Activated naive CD8-positive, alpha-beta T cell treated with anti-CD3 and anti-CD28 coated beads, Interleukin-2, amount 10 ng/mL, durations not matched to agents 7 days and 5 days (primary cell): ENCODE measurements at regions of chr14 and their contacts with region 1.

Region 1: GRCh38 chr14:63852817-63853731 is at the start of gene SYNE2:
- DNase-seq: peak; percentile 91
- ATAC-seq: peak; percentile 85
- H3K4me3 Mint-ChIP-seq: peak within 1 kb of the TSS; percentile 94
- H3K27ac Mint-ChIP-seq: peak within 1 kb of the TSS; percentile 90
- H3K4me1 Mint-ChIP-seq: peaks cover 36% of the 10 kb centered on the region
- H3K27me3 Mint-ChIP-seq: no peaks in the 10 kb centered on the region
- total RNA-seq, gene SYNE2: 233 to 245 TPM

Region 2: DNA sequence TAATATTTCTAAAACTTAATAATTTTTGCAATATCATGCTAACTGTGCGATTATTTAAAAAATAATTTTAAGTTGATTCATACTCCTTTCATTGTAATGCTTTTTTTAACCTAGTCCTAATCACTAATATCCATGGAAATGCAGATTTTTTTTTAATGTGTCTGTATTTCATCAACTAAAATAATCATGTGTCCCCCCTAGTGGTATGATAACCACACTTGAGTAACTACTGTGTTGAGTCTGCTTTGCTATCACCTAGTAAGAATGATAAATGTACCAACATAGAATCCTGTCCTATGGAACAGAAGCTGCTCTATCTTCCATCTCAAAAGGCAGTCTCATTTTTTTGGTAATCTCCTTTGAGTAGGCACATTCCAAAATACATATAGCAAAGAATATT is 19.3 kb before region 1 on chr14:
- POLR2A ChIA-PET with region 1: no interaction called
- DNase-seq: no peak
- ATAC-seq: no peak
- H3K4me3 Mint-ChIP-seq: no peak overlapping the region
- H3K27ac Mint-ChIP-seq: no peak overlapping the region
- H3K4me1 Mint-ChIP-seq: no peaks in the 10 kb centered on the region
- H3K27me3 Mint-ChIP-seq: peaks cover 3% of the 10 kb centered on the region

Region 3: GRCh38 chr14:63867933-63868921 is 15.2 kb after region 1 on chr14:
- POLR2A ChIA-PET with region 1: interaction called, 42 read pairs
- DNase-seq: no peak
- ATAC-seq: no peak
- H3K4me3 Mint-ChIP-seq: peak overlapping the region; percentile 62
- H3K27ac Mint-ChIP-seq: peak overlapping the region; percentile 91
- H3K4me1 Mint-ChIP-seq: peaks cover 62% of the 10 kb centered on the region
- H3K27me3 Mint-ChIP-seq: no peaks in the 10 kb centered on the region

Region 4: GRCh38 chr14:63938198-63939005 is 85.3 kb after region 1 on chr14:
- POLR2A ChIA-PET with region 1: interaction called, 52 read pairs
- DNase-seq: peak; percentile 54
- ATAC-seq: peak; percentile 63
- H3K4me3 Mint-ChIP-seq: no peak overlapping the region
- H3K27ac Mint-ChIP-seq: no peak overlapping the region
- H3K4me1 Mint-ChIP-seq: peaks cover 44% of the 10 kb centered on the region
- H3K27me3 Mint-ChIP-seq: no peaks in the 10 kb centered on the region

Region 5: DNA sequence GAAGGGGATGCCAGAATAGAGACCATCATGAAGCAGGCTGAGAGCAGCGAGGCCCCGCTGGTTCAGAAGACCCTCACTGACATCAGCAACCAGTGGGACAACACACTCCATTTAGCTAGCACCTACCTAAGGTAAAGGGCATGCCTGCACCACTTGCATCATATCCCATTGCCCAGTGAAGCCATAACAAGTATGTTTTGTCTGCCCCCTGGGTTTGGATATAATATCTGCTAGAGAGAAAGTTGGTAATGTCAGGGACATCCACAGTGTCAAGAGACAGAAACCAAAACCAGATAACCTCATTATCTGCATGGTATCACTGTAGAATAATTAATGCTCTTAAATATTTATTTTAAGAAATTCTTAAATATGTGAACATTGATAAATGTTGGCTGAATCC is 173.5 kb after region 1 on chr14:
- POLR2A ChIA-PET with region 1: no interaction called
- DNase-seq: no peak
- ATAC-seq: no peak
- H3K4me3 Mint-ChIP-seq: no peak overlapping the region
- H3K27ac Mint-ChIP-seq: no peak overlapping the region
- H3K4me1 Mint-ChIP-seq: no peaks in the 10 kb centered on the region
- H3K27me3 Mint-ChIP-seq: no peaks in the 10 kb centered on the region